CD8-positive, alpha-beta T cell (primary cell): ENCODE measurements at regions of chr6 and their contacts with region 1.

Region 1: DNA sequence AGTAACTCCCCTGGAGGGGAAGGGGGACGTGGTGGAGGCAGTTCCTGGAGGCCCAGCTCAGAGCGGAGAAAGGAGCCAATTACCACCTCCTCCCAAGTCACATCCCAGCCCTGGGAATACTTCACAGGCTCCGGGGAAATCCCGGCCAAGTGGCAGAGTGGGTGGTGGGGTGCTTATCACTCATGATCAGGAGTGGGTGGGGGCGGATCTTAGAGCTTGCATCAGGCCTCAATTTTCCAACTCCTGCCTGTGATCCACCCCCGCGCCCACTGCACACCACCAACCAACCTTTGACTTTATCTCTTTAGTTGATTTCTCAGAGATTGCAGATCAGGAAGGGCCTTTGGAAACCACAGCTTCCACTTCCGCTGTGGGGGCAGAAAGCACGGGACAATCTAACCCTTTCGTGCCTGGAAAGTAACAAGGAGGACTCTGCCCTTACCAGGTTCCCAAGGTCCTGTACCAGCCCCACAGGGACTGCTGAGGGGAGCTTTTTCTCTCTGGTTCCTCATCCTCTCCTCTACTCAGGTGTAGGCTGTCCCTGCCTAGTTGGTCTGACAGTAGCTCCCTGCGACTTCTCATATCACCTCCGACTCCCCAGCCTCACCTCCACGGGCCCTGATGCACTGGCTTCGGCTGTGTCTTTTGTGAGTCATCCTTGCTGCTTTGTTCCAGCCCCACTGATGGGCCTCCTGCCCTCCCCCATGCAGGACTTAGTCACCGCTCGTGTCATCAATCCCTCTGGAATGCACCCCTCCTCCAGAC is 24.9 kb upstream of the IER3 start:
- DNase-seq: peak in 8 of 9 experiments; percentile 46 to 75 (median 63)
- ATAC-seq: peak; percentile 88
- H3K4me3 ChIP-seq: peak overlapping the region in 1 of 2 experiments; percentile 28
- H3K4me3 Mint-ChIP-seq: peak overlapping the region; percentile 68
- H3K27ac ChIP-seq: peak overlapping the region in 1 of 2 experiments; percentile 56
- H3K27ac Mint-ChIP-seq: peak overlapping the region; percentile 89
- H3K4me1 ChIP-seq: peaks cover 39% of the 10 kb centered on the region
- H3K4me1 Mint-ChIP-seq: peaks cover 61% of the 10 kb centered on the region
- H3K27me3 ChIP-seq: no peaks in the 10 kb centered on the region
- H3K27me3 Mint-ChIP-seq: no peaks in the 10 kb centered on the region
- CTCF ChIP-seq: no peak

Region 2: GRCh38 chr6:30793521-30794194 is 24.4 kb after region 1 on chr6:
- CTCF ChIA-PET with region 1: interaction called, 9 read pairs
- POLR2A ChIA-PET with region 1: interaction called, 5 read pairs
- intact Hi-C with region 1: loop called in 1 of 2 experiments (anchors 2 kb)
- DNase-seq: peak in 3 of 9 experiments; percentile 53 to 74 (median 64)
- ATAC-seq: peak; percentile 82
- H3K4me3 ChIP-seq: peak overlapping the region; percentile 21 to 28
- H3K4me3 Mint-ChIP-seq: peak overlapping the region; percentile 78
- H3K27ac ChIP-seq: peak overlapping the region; percentile 60 to 90
- H3K27ac Mint-ChIP-seq: peak overlapping the region; percentile 98
- H3K4me1 ChIP-seq: peaks cover 30% of the 10 kb centered on the region
- H3K4me1 Mint-ChIP-seq: peaks cover 55% of the 10 kb centered on the region
- H3K27me3 ChIP-seq: no peaks in the 10 kb centered on the region
- H3K27me3 Mint-ChIP-seq: no peaks in the 10 kb centered on the region
- CTCF ChIP-seq: no peak

Region 3: DNA sequence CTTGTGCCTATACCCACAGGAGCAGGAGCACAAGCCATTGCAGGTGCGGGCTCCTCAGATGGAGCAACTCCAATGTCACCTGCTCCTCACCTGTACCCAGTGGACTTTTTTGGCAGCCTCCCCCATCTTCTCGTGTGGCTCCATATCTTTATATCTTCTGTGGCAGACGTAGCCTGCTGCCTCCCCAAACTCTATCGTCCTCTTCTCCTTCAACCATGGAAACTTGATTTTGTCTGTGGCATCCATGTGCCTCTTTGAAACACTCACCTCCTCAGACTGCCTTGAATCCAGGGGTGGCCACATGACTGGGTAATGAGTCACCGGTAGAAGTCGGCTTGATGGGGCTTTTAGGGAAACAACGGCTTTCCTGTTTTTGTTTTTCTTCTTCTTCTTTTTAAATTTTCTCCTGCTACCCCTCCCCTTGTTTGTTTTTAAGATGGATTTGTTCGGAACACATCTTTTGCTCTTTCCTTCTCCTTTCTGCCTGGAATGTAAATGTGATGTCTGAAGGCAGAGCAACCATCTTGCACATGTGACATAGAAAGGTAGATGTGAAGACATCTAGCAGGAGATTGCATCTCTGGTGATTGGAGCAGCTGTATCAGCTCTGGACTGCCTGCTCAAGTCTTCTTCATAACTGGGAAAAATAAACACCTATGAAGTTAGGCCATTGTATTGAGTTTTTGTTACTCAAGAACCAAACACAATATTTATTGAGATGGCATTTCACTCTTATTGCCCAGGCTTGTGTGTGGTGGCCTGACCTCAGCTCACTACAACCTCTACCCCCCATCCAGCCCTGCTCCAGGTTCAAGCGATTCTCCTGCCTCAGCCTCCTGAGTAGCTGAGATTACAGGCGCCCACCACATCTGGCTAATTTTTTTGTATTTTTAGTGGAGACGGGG is 45.1 kb after region 1 on chr6:
- CTCF ChIA-PET with region 1: no interaction called
- POLR2A ChIA-PET with region 1: interaction called, 5 read pairs
- intact Hi-C with region 1: loop called in 1 of 2 experiments (anchors 5 kb)
- DNase-seq: peak in 5 of 9 experiments; percentile 41 to 68 (median 59)
- ATAC-seq: peak; percentile 82
- H3K4me3 ChIP-seq: no peak overlapping the region
- H3K4me3 Mint-ChIP-seq: no peak overlapping the region
- H3K27ac ChIP-seq: no peak overlapping the region
- H3K27ac Mint-ChIP-seq: peak overlapping the region; percentile 75
- H3K4me1 ChIP-seq: peaks cover 34% of the 10 kb centered on the region
- H3K4me1 Mint-ChIP-seq: peaks cover 66% of the 10 kb centered on the region
- H3K27me3 ChIP-seq: no peaks in the 10 kb centered on the region
- H3K27me3 Mint-ChIP-seq: no peaks in the 10 kb centered on the region
- CTCF ChIP-seq: no peak